A549 (cell line): ENCODE measurements at regions of chr9 and their contacts with region 1.

Region 1: DNA sequence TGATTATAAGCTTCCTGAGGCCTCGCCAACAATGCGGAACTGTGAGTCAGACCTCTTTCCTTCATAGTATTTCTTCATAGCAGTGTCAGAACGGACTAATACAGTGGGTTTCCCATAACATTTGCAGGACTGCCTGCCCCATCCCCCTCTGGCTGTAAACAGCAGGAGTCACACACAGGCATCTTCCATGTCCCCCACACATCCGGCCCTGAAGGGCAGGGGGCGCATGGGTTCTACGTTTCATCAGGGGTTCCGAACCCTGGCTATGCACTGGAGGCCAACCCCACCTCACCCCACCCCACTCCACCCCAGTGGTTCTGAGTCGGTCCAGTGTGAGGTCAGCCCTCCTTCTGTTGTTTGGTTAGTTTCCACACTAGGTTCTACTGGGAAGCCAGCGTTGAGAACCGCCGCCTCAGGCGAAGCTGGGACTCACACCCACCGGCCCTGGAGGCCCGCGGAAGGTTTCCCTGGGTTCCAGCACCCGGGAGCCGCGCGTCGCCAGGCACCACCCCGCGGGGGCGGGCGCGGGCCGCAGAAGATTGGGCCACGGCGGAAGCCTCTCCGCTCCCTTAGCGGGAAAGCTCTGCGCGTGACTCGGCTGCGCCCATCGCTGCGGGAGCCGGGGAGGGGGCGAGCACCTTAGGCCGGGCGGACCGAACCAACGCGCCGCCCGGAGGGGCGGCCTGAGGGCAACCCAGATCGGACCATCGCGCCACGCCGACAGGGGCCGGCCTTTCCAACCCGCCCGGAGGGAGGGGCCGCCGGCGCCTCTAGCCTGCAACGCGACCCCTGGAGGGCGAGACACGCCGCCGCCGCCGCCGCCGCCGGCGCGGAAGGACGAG is at the start of gene RUSC2:
- DNase-seq: peak; percentile 73 to 91
- ATAC-seq: peak; percentile 74 to 78
- H3K4me3 ChIP-seq: peak within 1 kb of the TSS; percentile 57
- H3K27ac ChIP-seq: peak within 1 kb of the TSS; percentile 96
- H3K4me1 ChIP-seq: peaks cover 34% of the 10 kb centered on the region
- CTCF ChIP-seq: peak; percentile 41; the same call in 2 of the 3 replicates
- EP300 ChIP-seq: peak in 1 of 2 experiments; percentile 27; a peak in 1 of 5 replicates
- POLR2A ChIP-seq: peak; percentile 36
- RAD21 ChIP-seq: peak; percentile 65 to 73
- polyA plus RNA-seq, gene RUSC2: 15.9 and 16.8 TPM in 2 replicates

Region 2: GRCh38 chr9:35470894-35471293 is 18.6 kb before region 1 on chr9:
- CTCF ChIA-PET with region 1: interaction called, 11 read pairs
- POLR2A ChIA-PET with region 1: interaction called, 5 read pairs
- DNase-seq: peak in 1 of 2 experiments; percentile 75
- ATAC-seq: peak; percentile 96 to 98
- H3K4me3 ChIP-seq: no peak overlapping the region
- H3K27ac ChIP-seq: peak overlapping the region; percentile 79 to 80
- H3K4me1 ChIP-seq: peaks cover 37% of the 10 kb centered on the region
- CTCF ChIP-seq: no peak
- EP300 ChIP-seq: peak; percentile 83 to 87; a peak in 3 of 5 replicates
- POLR2A ChIP-seq: no peak
- RAD21 ChIP-seq: peak in 1 of 2 experiments; percentile 50; a peak in 3 of 5 replicates

Region 3: DNA sequence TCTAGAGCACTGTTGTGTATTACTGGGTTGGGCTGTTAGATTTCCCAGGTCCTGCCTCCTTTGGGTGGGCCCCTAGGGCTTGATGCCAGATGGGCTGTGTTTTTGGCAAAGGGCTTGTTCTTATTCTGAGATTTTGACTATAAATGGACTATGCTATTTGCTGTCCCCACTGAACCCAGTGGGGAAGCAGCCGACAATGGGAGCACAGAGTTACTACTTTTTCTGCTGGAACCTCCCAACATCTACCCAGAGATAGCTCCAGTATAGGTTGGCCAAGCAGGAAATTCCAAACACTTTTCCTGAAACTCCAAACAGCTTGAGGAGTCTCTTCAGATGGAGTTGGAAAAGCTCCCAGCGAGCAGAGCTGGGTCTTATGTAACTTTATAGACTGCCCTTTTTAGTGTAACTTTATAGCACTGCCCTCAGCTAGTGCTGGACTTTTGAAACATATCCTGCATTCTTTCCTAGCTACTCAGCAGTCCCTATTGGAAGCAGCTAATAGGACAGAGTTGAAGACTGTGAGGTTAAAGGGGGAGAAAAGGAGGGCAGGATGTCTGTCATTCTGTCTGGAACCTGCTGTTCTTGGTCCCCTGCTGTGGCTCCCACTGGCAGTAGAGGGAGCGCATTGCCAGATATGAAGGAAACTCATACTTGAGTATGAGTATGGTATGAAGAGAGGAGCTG is 21.4 kb after region 1 on chr9:
- CTCF ChIA-PET with region 1: interaction called, 23 read pairs
- POLR2A ChIA-PET with region 1: interaction called, 18 read pairs
- DNase-seq: peak; percentile 79 to 97
- ATAC-seq: peak; percentile 95 to 96
- H3K4me3 ChIP-seq: peak overlapping the region; percentile 8; the same call in 2 of the 3 replicates
- H3K27ac ChIP-seq: peak overlapping the region; percentile 95 to 96
- H3K4me1 ChIP-seq: peaks cover 78% of the 10 kb centered on the region
- CTCF ChIP-seq: peak; percentile 40
- EP300 ChIP-seq: peak; percentile 91 to 97; a peak in 4 of 5 replicates
- POLR2A ChIP-seq: no peak
- RAD21 ChIP-seq: peak; percentile 60 to 71

Region 4: DNA sequence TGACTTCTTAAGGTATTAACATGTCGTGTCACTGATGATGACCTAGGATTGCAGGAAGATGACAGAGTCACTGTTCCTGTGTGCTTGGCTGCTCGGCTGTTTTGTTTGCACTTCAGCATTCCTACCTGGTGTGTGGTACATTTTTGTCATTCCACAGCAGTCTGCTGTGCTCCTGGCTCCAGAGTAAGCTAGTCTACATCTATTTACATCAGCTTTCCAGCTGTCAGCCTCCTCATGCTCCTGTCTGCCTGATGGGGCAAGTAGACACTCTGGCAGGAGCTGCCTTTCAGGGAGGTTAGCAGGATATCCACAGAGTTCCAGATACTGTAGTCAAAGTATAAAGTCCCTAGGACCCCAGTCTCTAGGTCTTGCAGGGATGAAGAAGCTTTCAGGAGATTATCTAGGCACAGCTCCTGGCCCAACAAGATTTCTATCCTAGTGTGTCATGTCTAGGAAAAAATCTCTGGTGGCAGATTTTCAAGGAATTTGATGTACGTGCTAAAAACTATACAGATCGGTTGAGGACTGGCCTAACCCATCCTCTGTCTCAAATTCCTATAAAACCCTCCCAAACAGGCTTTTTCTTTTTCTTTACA is 28.8 kb after region 1 on chr9:
- CTCF ChIA-PET with region 1: interaction called, 22 read pairs
- POLR2A ChIA-PET with region 1: interaction called, 18 read pairs
- DNase-seq: peak; percentile 95 to 98
- ATAC-seq: peak; percentile 91
- H3K4me3 ChIP-seq: no peak overlapping the region
- H3K27ac ChIP-seq: peak overlapping the region; percentile 95 to 96
- H3K4me1 ChIP-seq: peaks cover 96% of the 10 kb centered on the region
- CTCF ChIP-seq: no peak
- EP300 ChIP-seq: peak; percentile 99
- POLR2A ChIP-seq: no peak
- RAD21 ChIP-seq: peak; percentile 35 to 69

Region 5: GRCh38 chr9:35538361-35539234 is 49.1 kb after region 1 on chr9:
- CTCF ChIA-PET with region 1: interaction called, 14 read pairs
- POLR2A ChIA-PET with region 1: interaction called, 3 read pairs
- DNase-seq: no peak
- ATAC-seq: peak in 1 of 2 experiments; percentile 27; a peak in 2 of 6 replicates
- H3K4me3 ChIP-seq: no peak overlapping the region
- H3K27ac ChIP-seq: peak overlapping the region; percentile 59 to 78
- H3K4me1 ChIP-seq: peaks cover 63% of the 10 kb centered on the region
- CTCF ChIP-seq: no peak
- EP300 ChIP-seq: no peak
- POLR2A ChIP-seq: no peak
- RAD21 ChIP-seq: no peak

Region 6: GRCh38 chr9:35548571-35548970 is 59.0 kb after region 1 on chr9:
- CTCF ChIA-PET with region 1: interaction called, 87 read pairs
- POLR2A ChIA-PET with region 1: interaction called, 25 read pairs
- DNase-seq: no peak
- ATAC-seq: peak in 1 of 2 experiments; percentile 18; a peak in 3 of 6 replicates
- H3K4me3 ChIP-seq: no peak overlapping the region
- H3K27ac ChIP-seq: peak overlapping the region; percentile 28 to 87; a peak in 4 of 6 replicates
- H3K4me1 ChIP-seq: peaks cover 59% of the 10 kb centered on the region
- CTCF ChIP-seq: no peak
- EP300 ChIP-seq: no peak
- POLR2A ChIP-seq: no peak
- RAD21 ChIP-seq: no peak

Region 7: GRCh38 chr9:35593581-35593980 is 104.0 kb after region 1 on chr9:
- CTCF ChIA-PET with region 1: no interaction called
- POLR2A ChIA-PET with region 1: no interaction called
- DNase-seq: no peak
- ATAC-seq: no peak
- H3K4me3 ChIP-seq: no peak overlapping the region
- H3K27ac ChIP-seq: no peak overlapping the region
- H3K4me1 ChIP-seq: no peaks in the 10 kb centered on the region
- CTCF ChIP-seq: no peak
- EP300 ChIP-seq: no peak
- POLR2A ChIP-seq: no peak
- RAD21 ChIP-seq: no peak

Region 8: GRCh38 chr9:35781066-35781465 is 291.5 kb after region 1 on chr9:
- CTCF ChIA-PET with region 1: no interaction called
- POLR2A ChIA-PET with region 1: no interaction called
- DNase-seq: no peak
- ATAC-seq: no peak
- H3K4me3 ChIP-seq: no peak overlapping the region
- H3K27ac ChIP-seq: no peak overlapping the region
- H3K4me1 ChIP-seq: no peaks in the 10 kb centered on the region
- CTCF ChIP-seq: no peak
- EP300 ChIP-seq: no peak
- POLR2A ChIP-seq: no peak
- RAD21 ChIP-seq: no peak